ENCODE measurements at regions of chr1 and their contacts with region 1.

Region 1: DNA sequence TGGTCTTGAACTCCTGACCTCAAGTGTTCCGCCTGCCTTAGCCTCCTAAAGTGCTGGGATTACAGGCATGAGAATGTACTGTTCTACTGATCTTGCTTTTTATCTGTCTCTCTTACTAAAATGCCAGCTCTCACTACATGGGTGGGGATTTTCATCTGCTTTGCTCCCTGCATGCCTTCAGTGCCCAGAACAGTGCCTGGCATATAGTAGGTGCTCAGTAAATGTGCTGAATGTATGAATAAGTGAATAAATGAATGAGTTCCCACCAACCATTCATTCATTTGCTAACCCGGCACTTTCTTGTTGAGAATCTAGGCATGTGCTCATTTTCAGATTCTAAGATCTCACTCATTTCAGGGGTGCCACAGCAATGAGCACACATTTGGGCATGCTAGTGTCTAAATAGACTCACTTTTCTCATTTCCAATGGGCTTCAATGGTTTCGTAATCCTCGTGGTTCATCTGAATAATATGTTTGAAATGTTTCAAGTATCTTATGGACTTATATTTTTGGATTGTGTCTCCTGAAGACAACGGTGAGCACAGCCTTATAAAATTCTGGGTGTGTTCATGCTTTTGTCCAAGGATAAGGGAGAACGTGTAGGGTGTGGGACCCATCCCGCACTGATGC is 7.6 kb downstream of the DHRS3 start:
- DNase-seq: no peak
- H3K4me3 ChIP-seq: no peak overlapping the region
- CTCF ChIP-seq: no peak
- POLR2A ChIP-seq: no peak

Region 2: DNA sequence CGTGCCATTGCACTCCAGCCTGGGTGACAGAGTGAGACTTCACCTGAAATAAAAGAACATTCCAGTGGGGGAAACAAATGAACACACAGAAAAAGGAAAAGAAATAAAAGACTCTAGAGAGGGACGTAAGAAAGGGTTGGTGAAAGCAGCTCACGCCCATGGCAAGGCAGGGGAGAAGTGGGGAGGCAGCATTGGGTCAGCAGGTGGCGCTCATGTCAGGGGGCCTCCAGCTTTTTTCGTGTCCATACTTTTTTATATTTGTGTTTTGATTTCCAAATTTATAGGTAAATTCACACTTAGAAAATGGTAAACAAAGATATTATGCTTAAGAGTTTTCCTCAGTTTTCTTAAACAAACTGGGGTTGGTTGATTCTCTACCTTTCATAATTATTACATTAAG is 335.1 kb before region 1 on chr1:
- intact Hi-C with region 1: loop called (anchors 5 kb)
- DNase-seq: no peak
- H3K4me3 ChIP-seq: no peak overlapping the region
- CTCF ChIP-seq: no peak
- POLR2A ChIP-seq: no peak

Region 3: DNA sequence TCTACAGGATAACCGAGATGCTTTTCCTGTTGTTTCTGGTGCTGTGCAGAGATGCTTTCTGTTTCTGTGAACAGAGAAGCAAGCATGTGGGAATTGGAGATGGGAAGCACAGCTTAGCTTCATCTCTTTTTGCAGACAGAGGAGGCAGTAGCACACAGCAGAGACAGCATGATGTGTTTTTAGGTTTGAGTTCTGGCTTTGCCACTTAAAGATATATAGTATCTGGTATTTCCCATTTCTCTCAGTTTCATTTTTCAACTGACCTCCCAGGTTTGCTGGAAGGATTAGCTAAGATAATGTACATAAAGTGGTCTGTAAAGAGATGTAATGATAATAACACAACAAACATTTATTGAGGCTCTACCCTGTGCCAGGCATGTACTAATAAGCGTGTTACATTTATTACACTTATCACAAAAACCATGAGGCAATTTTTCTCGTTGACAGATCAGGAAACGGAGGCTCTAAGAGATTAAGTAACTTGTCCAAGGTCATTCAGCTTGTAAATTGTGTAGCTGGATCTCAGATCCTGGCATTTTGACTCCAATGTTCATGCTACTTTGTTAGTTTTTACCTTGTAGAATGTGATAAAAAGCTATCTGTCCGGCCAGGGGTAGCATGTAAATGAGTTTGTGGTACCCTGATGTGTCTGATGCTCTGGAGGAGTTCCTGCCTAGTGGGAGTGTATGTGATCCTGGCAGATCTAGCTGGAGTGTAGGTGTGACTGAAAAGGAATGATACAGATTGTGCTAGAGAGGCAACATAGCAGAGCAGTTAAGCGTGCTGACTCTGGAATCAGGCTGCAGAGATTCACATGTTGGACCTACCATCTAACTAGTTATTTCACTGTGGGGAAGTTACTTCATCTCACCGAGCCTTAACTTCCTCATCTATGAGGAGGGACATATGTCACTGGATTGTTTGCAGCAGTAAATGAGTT is 234.0 kb before region 1 on chr1:
- intact Hi-C with region 1: no loop called
- DNase-seq: no peak
- H3K4me3 ChIP-seq: no peak overlapping the region
- CTCF ChIP-seq: no peak
- POLR2A ChIP-seq: no peak